ENCODE measurements at regions of chr2 and their contacts with region 1.

Region 1: GRCh38 chr2:185578322-185578721 is 160.3 kb upstream of the FSIP2 start:
- DNase-seq: no peak
- ATAC-seq: no peak
- H3K4me3 ChIP-seq: no peak overlapping the region
- H3K4me3 Mint-ChIP-seq: no peak overlapping the region
- H3K27ac ChIP-seq: no peak overlapping the region
- H3K27ac Mint-ChIP-seq: no peak overlapping the region
- H3K4me1 ChIP-seq: no peaks in the 10 kb centered on the region
- H3K4me1 Mint-ChIP-seq: no peaks in the 10 kb centered on the region
- H3K27me3 ChIP-seq: no peaks in the 10 kb centered on the region
- H3K27me3 Mint-ChIP-seq: no peaks in the 10 kb centered on the region

Region 2: GRCh38 chr2:185108588-185108987 is 469.7 kb before region 1 on chr2:
- CTCF ChIA-PET with region 1: no interaction called
- POLR2A ChIA-PET with region 1: no interaction called
- intact Hi-C with region 1: loop called in 1 of 2 experiments (anchors 5 kb)
- DNase-seq: no peak
- ATAC-seq: no peak
- H3K4me3 ChIP-seq: no peak overlapping the region
- H3K4me3 Mint-ChIP-seq: no peak overlapping the region
- H3K27ac ChIP-seq: no peak overlapping the region
- H3K27ac Mint-ChIP-seq: no peak overlapping the region
- H3K4me1 ChIP-seq: no peaks in the 10 kb centered on the region
- H3K4me1 Mint-ChIP-seq: no peaks in the 10 kb centered on the region
- H3K27me3 ChIP-seq: no peaks in the 10 kb centered on the region
- H3K27me3 Mint-ChIP-seq: no peaks in the 10 kb centered on the region